Ascending aorta (tissue), 2 donors: ENCODE measurements at regions of chr16 and their contacts with region 1.

Region 1: GRCh38 chr16:85652431-85653221 is 36.1 kb downstream of the GINS2 start:
- DNase-seq: peak in 1 of 2 donors; percentile 79
- H3K4me3 ChIP-seq: no peak overlapping the region
- H3K27ac ChIP-seq: peak overlapping the region; percentile 52 to 76
- H3K4me1 ChIP-seq: peaks cover 8 to 23% of the 10 kb centered on the region in 2 donors
- H3K27me3 ChIP-seq: no peaks in the 10 kb centered on the region
- CTCF ChIP-seq: no peak

Region 2: GRCh38 chr16:85615852-85616606 is 36.6 kb before region 1 on chr16:
- intact Hi-C with region 1: loop called (anchors 2 kb)
- DNase-seq: peak; percentile 42 to 90
- H3K4me3 ChIP-seq: peak overlapping the region in 1 of 2 donors; percentile 23
- H3K27ac ChIP-seq: peak overlapping the region; percentile 91 to 92
- H3K4me1 ChIP-seq: peaks cover 8 to 30% of the 10 kb centered on the region in 2 donors
- H3K27me3 ChIP-seq: no peaks in the 10 kb centered on the region
- CTCF ChIP-seq: peak; percentile 85 to 94 (median 90)